ENCODE measurements at regions of chr4 and their contacts with region 1.

Region 1: GRCh38 chr4:184474263-184475095 is at the start of gene IRF2:
- DNase-seq: peak; percentile 97 to 99
- H3K4me3 ChIP-seq: peak within 1 kb of the TSS; percentile 80 to 89
- H3K27ac ChIP-seq: peak within 1 kb of the TSS; percentile 88 to 96
- H3K4me1 ChIP-seq: peaks cover 0 to 48% (median 26%) of the 10 kb centered on the region in 4 donors
- H3K27me3 ChIP-seq: no peaks in the 10 kb centered on the region
- CTCF ChIP-seq: peak in 1 of 2 experiments; percentile 17

Region 2: GRCh38 chr4:184287697-184288255 is 186.7 kb before region 1 on chr4:
- intact Hi-C with region 1: loop called (anchors 5 kb)
- DNase-seq: no peak
- H3K4me3 ChIP-seq: no peak overlapping the region
- H3K27ac ChIP-seq: no peak overlapping the region
- H3K4me1 ChIP-seq: peaks cover 0 to 8% (median 4%) of the 10 kb centered on the region in 4 donors
- H3K27me3 ChIP-seq: no peaks in the 10 kb centered on the region
- CTCF ChIP-seq: peak; percentile 34 to 51

Region 3: GRCh38 chr4:184343502-184344177 is 130.8 kb before region 1 on chr4:
- intact Hi-C with region 1: loop called (anchors 10 kb)
- DNase-seq: peak; percentile 68 to 84
- H3K4me3 ChIP-seq: peak overlapping the region; percentile 54 to 66
- H3K27ac ChIP-seq: peak overlapping the region; percentile 64 to 70
- H3K4me1 ChIP-seq: peaks cover 0 to 10% (median 0%) of the 10 kb centered on the region in 4 donors
- H3K27me3 ChIP-seq: no peaks in the 10 kb centered on the region
- CTCF ChIP-seq: no peak

Region 4: GRCh38 chr4:184444953-184445309 is 29.5 kb before region 1 on chr4:
- intact Hi-C with region 1: no loop called
- DNase-seq: peak in 1 of 2 donors; percentile 40
- H3K4me3 ChIP-seq: no peak overlapping the region
- H3K27ac ChIP-seq: no peak overlapping the region
- H3K4me1 ChIP-seq: peaks cover 0 to 82% (median 45%) of the 10 kb centered on the region in 4 donors
- H3K27me3 ChIP-seq: no peaks in the 10 kb centered on the region
- CTCF ChIP-seq: no peak

Region 5: GRCh38 chr4:184538023-184538599 is 63.6 kb after region 1 on chr4:
- intact Hi-C with region 1: loop called (anchors 2 kb)
- DNase-seq: peak; percentile 92
- H3K4me3 ChIP-seq: peak overlapping the region; percentile 60 to 66
- H3K27ac ChIP-seq: peak overlapping the region; percentile 93
- H3K4me1 ChIP-seq: peaks cover 0 to 31% (median 12%) of the 10 kb centered on the region in 4 donors
- H3K27me3 ChIP-seq: no peaks in the 10 kb centered on the region
- CTCF ChIP-seq: peak; percentile 72 to 80

Measured in tibial artery (tissue), 4 donors.